ENCODE measurements at regions of chr6 and their contacts with region 1.

Region 1: DNA sequence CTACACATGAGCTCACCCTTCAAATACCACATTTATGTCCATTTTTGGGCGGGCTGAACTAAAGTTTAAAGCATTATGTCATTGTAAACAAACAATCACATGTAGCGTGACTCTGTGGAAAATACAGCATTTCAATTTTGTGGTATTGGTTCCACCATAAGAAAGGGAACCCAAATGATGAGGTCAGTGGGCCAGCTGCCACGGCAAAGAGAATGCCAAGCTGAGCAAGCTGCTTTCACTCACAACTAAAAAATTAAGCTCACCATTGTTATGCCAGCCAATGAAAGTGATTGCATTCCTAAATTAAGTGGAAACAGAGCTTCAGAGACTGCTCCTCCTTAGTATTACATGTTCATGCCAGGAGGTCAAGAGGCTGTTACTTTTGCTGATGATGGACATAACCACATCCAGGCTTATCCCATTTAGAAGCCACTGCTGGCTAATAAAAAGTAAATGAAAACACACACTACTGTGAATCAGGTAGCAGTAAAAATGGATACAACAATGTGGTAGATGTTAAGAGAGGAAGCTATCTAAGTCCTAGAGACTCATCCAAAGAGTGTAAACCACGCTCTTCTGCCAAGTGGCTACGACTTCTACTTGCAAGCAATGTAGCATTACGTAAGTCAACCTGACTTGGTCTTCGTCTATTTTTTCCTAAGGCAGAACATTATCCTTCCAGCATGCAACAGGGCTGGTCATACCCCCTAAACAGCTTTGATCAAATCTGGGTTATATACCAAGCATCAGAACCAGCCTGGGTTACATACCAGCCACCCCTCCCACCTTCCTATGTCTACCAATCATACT is 164.8 kb downstream of the BACH2 start:
- DNase-seq: peak; percentile 32 to 80
- H3K4me3 ChIP-seq: no peak overlapping the region
- H3K27ac ChIP-seq: peak overlapping the region; percentile 49
- H3K4me1 ChIP-seq: peaks cover 0 to 15% of the 10 kb centered on the region in 2 donors
- H3K27me3 ChIP-seq: no peaks in the 10 kb centered on the region
- CTCF ChIP-seq: no peak

Region 2: GRCh38 chr6:90113389-90113788 is 18.4 kb before region 1 on chr6:
- intact Hi-C with region 1: loop called (anchors 1 kb)
- DNase-seq: no peak
- H3K4me3 ChIP-seq: no peak overlapping the region
- H3K27ac ChIP-seq: no peak overlapping the region
- H3K4me1 ChIP-seq: no peaks in the 10 kb centered on the region
- H3K27me3 ChIP-seq: no peaks in the 10 kb centered on the region
- CTCF ChIP-seq: no peak

Region 3: GRCh38 chr6:90168693-90169131 is 36.9 kb after region 1 on chr6:
- intact Hi-C with region 1: no loop called
- DNase-seq: no peak
- H3K4me3 ChIP-seq: no peak overlapping the region
- H3K27ac ChIP-seq: no peak overlapping the region
- H3K4me1 ChIP-seq: peaks cover 0 to 35% of the 10 kb centered on the region in 2 donors
- H3K27me3 ChIP-seq: no peaks in the 10 kb centered on the region
- CTCF ChIP-seq: no peak